Right cardiac atrium (tissue), 5 donors: ENCODE measurements at regions of chr1 and their contacts with region 1.

Region 1: DNA sequence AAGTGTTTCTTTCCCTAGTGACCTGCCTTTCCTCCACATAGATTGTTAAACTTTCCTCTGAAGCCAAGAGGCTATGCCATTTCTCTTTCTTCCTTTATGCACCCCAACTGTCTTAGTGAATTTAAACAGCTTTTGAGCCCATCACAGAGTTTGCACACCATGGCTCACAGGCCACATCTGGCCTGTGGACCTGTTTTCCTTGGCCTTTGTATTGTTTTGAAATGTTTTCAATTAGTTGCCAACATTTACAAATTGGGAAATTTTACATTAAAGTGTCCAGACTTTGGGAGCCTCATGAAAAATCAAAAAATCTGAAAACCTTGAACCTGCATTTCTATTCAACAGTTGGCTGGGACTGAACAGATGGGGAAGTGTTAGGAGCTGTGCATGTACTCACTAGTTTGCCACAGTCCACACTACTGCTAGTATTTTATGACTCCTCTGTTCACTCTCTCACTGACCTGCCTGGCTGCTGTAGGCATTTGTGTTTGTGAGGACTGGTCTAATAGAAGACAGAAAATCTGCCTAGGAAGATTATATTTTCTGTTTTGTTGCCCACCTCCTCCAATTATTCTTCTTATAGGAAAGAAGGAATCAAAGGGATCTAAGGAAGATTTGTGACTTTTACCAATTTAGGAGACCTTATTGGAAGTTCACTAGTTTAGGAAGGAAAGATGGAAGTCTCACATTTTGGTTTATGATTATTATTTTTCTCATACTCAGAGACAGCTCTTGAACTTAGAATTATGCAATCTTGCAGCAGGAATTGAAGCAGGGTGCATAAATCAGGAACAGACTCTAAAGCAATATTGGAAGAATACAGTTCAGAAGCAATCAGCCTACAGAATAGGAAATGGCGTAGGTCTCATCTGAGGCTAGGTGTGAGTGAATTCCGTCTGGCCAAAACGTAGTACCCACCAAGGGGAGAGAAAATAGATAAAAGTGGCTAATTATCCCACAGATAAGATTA is 134.7 kb downstream of the HLX start:
- DNase-seq: no peak
- ATAC-seq: peak; percentile 34 to 61
- H3K4me3 ChIP-seq: no peak overlapping the region
- H3K27ac ChIP-seq: no peak overlapping the region
- H3K4me1 ChIP-seq: no peaks in the 10 kb centered on the region
- H3K27me3 ChIP-seq: no peaks in the 10 kb centered on the region

Region 2: DNA sequence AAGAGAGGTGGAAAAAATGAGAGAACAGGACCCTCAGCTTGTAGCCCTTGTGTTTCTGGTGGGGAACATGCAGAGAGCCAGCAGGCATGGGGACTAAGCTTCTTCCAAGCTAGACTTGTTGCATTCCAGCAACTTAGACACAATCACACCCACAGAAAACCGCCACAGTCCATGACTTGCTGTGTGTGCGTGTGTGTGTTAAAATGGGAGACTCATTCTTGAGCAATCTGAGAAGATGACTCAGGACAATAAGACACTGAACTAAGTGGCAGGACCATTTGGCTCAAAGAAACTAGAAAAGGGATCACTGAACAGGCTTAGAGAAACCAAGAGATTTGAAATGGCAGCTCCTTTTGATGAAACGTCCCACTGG is 56.8 kb before region 1 on chr1:
- intact Hi-C with region 1: no loop called
- DNase-seq: peak; percentile 43 to 61 (median 45)
- ATAC-seq: peak; percentile 82 to 85
- H3K4me3 ChIP-seq: no peak overlapping the region
- H3K27ac ChIP-seq: peak overlapping the region; percentile 88
- H3K4me1 ChIP-seq: no peaks in the 10 kb centered on the region
- H3K27me3 ChIP-seq: no peaks in the 10 kb centered on the region

Region 3: GRCh38 chr1:221074301-221074700 is 60.3 kb after region 1 on chr1:
- intact Hi-C with region 1: loop called in 1 of 4 experiments (anchors 10 kb)
- DNase-seq: no peak
- ATAC-seq: no peak
- H3K4me3 ChIP-seq: no peak overlapping the region
- H3K27ac ChIP-seq: no peak overlapping the region
- H3K4me1 ChIP-seq: peaks cover 5% of the 10 kb centered on the region
- H3K27me3 ChIP-seq: no peaks in the 10 kb centered on the region

Region 4: GRCh38 chr1:221101807-221102605 is 88.0 kb after region 1 on chr1:
- intact Hi-C with region 1: no loop called
- DNase-seq: no peak
- ATAC-seq: no peak
- H3K4me3 ChIP-seq: no peak overlapping the region
- H3K27ac ChIP-seq: no peak overlapping the region
- H3K4me1 ChIP-seq: peaks cover 2% of the 10 kb centered on the region
- H3K27me3 ChIP-seq: no peaks in the 10 kb centered on the region